MCF 10A (cell line): ENCODE measurements at regions of chr2 and their contacts with region 1.

Region 1: GRCh38 chr2:54558188-54559005 is 102.3 kb downstream of the SPTBN1 start:
- DNase-seq: peak; percentile 85
- H3K4me3 Mint-ChIP-seq: peak overlapping the region; percentile 87
- H3K27ac Mint-ChIP-seq: peak overlapping the region; percentile 96
- H3K4me1 Mint-ChIP-seq: peaks cover 42% of the 10 kb centered on the region
- H3K27me3 Mint-ChIP-seq: no peaks in the 10 kb centered on the region
- CTCF ChIP-seq: no peak

Region 2: DNA sequence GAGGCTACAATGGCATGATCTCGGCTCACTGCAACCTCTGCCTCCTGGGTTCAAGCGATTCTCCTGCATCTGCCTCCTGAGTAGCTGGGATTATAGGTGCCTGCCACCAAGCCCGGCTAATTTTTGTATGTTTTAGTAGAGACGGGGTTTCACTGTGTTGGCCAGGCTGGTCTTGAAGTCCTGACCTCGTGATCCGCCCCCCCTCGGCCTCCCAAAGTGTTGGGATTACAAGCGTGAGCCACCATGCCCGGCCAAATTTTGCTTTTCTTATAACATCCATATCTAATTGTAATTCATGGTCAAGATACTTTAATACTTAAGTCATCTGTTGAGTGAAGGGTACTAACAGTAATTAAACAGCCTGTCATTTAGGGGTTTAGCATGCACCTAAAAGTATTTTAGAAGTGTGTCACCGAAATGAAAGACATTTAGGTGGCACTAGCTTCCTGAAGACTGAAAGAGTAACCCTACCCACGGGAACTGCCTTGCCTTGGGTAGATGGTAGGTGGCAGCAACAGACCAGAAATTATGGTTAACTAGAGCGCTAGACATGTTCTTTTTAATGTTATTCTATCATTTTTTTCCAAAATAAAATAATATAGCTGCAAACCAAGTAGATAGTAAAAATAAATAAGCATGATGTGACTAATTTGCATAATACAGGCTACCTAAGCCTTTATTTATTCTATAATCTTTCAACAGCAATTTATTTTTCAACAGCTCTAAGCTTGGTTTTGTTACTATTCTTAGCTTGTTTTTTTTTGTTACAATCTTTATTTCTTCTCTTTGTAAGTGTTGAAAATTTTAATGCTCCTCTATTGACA is 451.6 kb before region 1 on chr2:
- CTCF ChIA-PET with region 1: interaction called, 4 read pairs
- POLR2A ChIA-PET with region 1: interaction called, 14 read pairs
- intact Hi-C with region 1: no loop called
- DNase-seq: peak; percentile 68
- H3K4me3 Mint-ChIP-seq: no peak overlapping the region
- H3K27ac Mint-ChIP-seq: no peak overlapping the region
- H3K4me1 Mint-ChIP-seq: peaks cover 6% of the 10 kb centered on the region
- H3K27me3 Mint-ChIP-seq: no peaks in the 10 kb centered on the region
- CTCF ChIP-seq: peak; percentile 64

Region 3: GRCh38 chr2:54503192-54503591 is 55.2 kb before region 1 on chr2:
- CTCF ChIA-PET with region 1: no interaction called
- POLR2A ChIA-PET with region 1: no interaction called
- intact Hi-C with region 1: no loop called
- DNase-seq: peak; percentile 38
- H3K4me3 Mint-ChIP-seq: no peak overlapping the region
- H3K27ac Mint-ChIP-seq: no peak overlapping the region
- H3K4me1 Mint-ChIP-seq: no peaks in the 10 kb centered on the region
- H3K27me3 Mint-ChIP-seq: no peaks in the 10 kb centered on the region
- CTCF ChIP-seq: peak; percentile 50

Region 4: DNA sequence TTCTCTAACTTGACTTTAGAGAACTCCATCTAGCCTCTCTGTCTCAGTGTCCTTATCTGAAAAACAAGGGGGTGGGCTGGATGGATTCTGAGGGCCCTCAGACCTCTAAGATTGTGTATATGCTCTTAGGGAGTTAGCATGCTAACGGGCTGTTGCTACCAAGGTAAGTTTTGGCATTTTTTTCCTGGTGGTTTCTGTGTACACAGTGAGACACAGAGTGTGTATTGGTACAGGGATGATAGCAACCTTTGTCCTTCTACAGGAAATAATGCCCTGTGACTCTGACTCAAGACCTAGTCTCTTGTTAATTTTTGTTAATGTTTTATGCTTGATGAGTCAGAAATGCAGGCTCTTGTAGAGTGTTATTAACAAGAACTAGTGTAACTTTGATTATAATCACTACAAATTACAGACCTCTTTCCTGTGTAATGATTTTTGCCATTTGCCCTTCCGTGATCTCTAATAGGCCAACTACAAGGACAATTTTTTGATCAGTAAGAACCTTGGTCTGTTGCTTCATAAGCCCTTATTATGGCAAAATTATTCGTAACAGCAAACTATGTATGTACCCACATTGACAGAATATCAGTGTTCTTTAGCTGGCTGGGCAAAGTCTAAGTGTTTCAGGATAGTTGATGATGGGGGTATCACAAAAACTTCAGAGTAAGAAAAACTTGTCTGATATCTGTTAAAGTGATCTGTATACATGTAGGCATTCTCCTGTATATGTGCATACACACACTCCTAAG is 12.5 kb before region 1 on chr2:
- CTCF ChIA-PET with region 1: interaction called, 5 read pairs
- POLR2A ChIA-PET with region 1: interaction called, 109 read pairs
- intact Hi-C with region 1: no loop called
- DNase-seq: no peak
- H3K4me3 Mint-ChIP-seq: no peak overlapping the region
- H3K27ac Mint-ChIP-seq: no peak overlapping the region
- H3K4me1 Mint-ChIP-seq: peaks cover 22% of the 10 kb centered on the region
- H3K27me3 Mint-ChIP-seq: no peaks in the 10 kb centered on the region
- CTCF ChIP-seq: no peak

Region 5: GRCh38 chr2:54589340-54590215 is 31.2 kb after region 1 on chr2:
- CTCF ChIA-PET with region 1: interaction called, 6 read pairs
- POLR2A ChIA-PET with region 1: interaction called, 42 read pairs
- intact Hi-C with region 1: no loop called
- DNase-seq: peak; percentile 65
- H3K4me3 Mint-ChIP-seq: peak overlapping the region; percentile 0
- H3K27ac Mint-ChIP-seq: peak overlapping the region; percentile 1
- H3K4me1 Mint-ChIP-seq: peaks cover 55% of the 10 kb centered on the region
- H3K27me3 Mint-ChIP-seq: no peaks in the 10 kb centered on the region
- CTCF ChIP-seq: no peak

Region 6: DNA sequence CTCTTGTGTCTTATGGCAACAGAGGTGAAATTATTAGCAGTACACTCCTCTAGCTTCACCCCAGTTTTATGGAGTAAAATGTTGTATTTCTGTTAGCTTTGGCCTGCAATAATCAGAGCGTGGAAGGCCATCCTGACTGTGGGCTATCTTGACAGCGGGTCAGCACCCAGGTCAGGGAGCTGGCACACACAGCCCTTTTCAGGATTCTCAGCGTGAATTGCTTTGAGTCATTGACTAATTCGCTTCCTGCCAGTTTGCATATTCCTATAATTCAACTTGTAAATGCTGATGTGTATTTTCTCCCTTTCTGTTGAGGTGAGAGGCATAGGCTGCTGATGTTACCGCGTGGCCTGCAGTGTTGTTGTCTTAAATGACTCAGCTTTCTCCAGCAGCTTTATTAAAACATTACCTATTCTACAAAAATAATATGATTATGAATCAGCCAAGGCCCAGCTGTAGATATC is 55.4 kb after region 1 on chr2:
- CTCF ChIA-PET with region 1: interaction called, 4 read pairs
- POLR2A ChIA-PET with region 1: interaction called, 18 read pairs
- intact Hi-C with region 1: loop called (anchors 2 kb)
- DNase-seq: peak; percentile 64
- H3K4me3 Mint-ChIP-seq: no peak overlapping the region
- H3K27ac Mint-ChIP-seq: peak overlapping the region; percentile 90
- H3K4me1 Mint-ChIP-seq: peaks cover 19% of the 10 kb centered on the region
- H3K27me3 Mint-ChIP-seq: no peaks in the 10 kb centered on the region
- CTCF ChIP-seq: no peak

Region 7: DNA sequence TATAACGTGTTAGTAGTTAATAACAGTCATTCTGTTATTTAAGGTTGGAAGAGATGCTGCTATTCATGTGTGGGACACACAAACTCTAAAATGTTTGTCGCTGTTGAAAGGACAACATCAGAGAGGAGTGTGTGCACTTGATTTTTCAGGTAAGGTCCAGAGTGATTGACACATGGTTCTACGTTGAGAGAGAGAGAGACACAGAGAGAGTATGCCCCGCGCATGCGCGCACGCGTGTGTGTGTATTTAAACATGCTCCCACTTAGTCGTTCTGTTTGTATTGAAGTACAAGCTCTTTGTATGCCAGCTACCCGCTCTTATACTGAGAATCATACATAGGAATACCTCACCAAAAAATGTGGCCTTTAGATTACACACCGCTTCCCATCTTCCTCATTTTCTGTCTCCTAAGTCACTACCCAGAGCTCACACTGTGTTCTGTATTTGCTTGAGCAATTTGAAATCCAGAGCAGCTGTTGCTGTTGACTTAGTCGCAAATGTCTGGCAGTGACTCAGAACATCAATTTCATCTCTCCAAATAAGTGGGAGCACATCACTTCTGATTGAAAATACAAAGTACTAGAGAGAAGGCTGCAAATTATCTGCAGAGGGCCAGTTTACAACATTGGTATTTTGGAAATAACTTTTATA is 313.2 kb after region 1 on chr2:
- CTCF ChIA-PET with region 1: no interaction called
- POLR2A ChIA-PET with region 1: no interaction called
- intact Hi-C with region 1: no loop called
- DNase-seq: no peak
- H3K4me3 Mint-ChIP-seq: no peak overlapping the region
- H3K27ac Mint-ChIP-seq: no peak overlapping the region
- H3K4me1 Mint-ChIP-seq: no peaks in the 10 kb centered on the region
- H3K27me3 Mint-ChIP-seq: no peaks in the 10 kb centered on the region
- CTCF ChIP-seq: no peak